ENCODE measurements at regions of chr12 and their contacts with region 1.

Region 1: DNA sequence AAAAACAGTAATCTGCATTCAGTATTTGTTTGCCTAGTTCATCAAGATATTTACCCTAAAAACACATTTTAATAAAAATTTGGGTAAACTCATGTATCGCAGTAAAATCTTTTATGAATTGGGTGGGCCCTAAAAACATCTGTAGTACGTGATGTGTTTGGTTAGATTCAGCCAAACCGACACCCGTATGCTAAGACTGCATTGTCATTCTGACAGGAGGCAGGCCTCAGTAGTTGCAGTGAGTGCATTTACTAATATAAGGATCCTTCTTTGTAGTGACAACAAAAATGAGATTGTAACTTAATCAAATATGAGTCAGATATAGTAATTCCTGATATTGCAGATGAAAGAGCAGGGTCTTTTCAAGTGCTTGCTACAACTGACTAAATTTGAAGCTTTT is 191.8 kb downstream of the SLC16A7 start:
- DNase-seq: no peak
- ATAC-seq: no peak

Region 2: GRCh38 chr12:60308366-60308991 is 520.9 kb after region 1 on chr12:
- intact Hi-C with region 1: loop called (anchors 5 kb)
- DNase-seq: no peak
- ATAC-seq: no peak